SK-N-SH (cell line): ENCODE measurements at regions of chr18 and their contacts with region 1.

Region 1: GRCh38 chr18:61854578-61855448 is 38.0 kb downstream of the RNF152 start:
- DNase-seq: peak; percentile 69
- H3K4me3 ChIP-seq: peak overlapping the region in 1 of 2 experiments; percentile 6; a peak in 1 of 4 replicates
- H3K27ac ChIP-seq: peak overlapping the region; percentile 83 to 95
- H3K4me1 ChIP-seq: peaks cover 33 to 66% of the 10 kb centered on the region in 2 experiments
- H3K27me3 ChIP-seq: no peaks in the 10 kb centered on the region
- CTCF ChIP-seq: no peak
- EP300 ChIP-seq: peak; percentile 22 to 93; a peak in 3 of 4 replicates
- RAD21 ChIP-seq: no peak; the same call in none of the 2 replicates

Region 2: DNA sequence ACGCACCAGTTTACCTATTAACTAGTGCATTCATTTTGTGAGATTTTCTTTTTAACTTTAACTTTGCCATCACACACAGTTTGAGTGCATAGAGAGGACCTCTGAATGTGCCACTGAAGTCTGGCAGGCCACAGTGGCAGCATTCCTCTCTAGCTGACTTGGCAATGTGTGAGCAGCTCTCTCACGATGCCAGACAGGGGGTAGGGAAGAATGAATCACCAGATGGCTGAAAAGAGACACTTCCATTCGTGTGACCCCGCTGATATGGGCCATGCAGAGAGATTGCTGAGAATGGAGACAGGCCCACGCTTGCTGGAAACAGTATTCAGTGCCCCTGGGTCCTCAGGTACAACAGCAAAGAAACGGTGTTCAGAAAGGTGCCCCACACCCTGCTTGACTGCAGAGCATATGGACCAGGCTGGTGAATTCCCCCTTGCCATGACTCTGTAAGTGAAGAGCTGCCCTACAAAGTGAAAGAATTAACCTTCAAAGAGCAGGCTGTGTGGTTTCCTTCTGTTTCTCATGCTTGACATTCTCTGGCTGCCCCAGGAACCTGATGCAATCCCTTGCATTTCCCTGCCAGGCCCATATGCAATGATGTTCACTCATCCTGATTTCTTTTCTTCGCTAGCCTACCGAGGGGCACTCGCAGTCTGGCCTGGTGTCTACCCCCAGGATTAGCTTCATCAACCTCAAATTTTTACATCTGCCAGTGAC is 285.5 kb before region 1 on chr18:
- CTCF ChIA-PET with region 1: no interaction called
- POLR2A ChIA-PET with region 1: no interaction called
- DNase-seq: no peak
- H3K4me3 ChIP-seq: no peak overlapping the region
- H3K27ac ChIP-seq: peak overlapping the region; percentile 70 to 88; a peak in 3 of 4 replicates
- H3K4me1 ChIP-seq: peaks cover 0 to 14% of the 10 kb centered on the region in 2 experiments; a peak in 1 of 4 replicates
- H3K27me3 ChIP-seq: no peaks in the 10 kb centered on the region
- CTCF ChIP-seq: no peak
- EP300 ChIP-seq: peak in 1 of 2 experiments; percentile 61; a peak in 1 of 4 replicates
- RAD21 ChIP-seq: no peak

Region 3: DNA sequence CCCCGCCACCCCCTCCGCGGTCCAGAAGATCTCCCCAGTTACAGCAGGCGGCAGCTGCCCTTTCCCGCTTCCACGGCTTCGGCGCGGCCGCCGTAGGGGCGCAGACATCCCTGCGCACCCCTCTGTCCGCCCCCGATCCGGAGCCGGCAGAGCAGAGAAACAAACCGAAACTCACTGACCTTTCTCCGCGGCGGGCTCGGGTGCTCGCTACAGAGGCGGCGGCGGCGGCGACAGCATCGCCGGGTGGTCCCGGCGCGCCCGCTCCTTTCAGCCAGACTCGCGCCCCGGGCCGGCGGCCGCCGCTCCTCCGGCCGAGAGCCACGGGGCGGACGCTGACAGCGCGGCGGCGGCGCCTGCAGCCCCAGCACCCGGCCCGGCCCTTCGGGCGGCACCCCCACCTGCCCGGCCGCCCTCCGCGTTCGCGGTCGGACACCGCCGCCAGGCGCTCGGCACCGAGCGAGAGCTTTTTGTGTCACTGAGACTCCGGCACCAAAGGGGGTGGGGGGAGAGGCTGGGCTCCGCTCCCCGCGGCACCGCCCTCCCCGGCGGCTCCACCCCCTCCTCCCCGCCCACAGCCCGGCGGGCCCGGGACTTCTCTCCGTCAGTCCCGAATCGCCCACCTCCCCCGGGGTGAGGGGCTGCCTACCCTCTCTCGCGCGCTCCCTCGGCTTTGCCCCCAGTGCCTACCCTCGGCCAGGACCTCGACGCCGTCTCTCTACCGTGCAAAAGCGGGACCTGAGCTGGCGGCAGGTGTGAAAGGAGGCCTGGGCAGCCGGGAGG is 39.3 kb after region 1 on chr18:
- CTCF ChIA-PET with region 1: interaction called, 26 read pairs
- POLR2A ChIA-PET with region 1: interaction called, 22 read pairs
- DNase-seq: peak; percentile 97
- H3K4me3 ChIP-seq: peak overlapping the region; percentile 91 to 95
- H3K27ac ChIP-seq: peak overlapping the region; percentile 27 to 85; a peak in 3 of 4 replicates
- H3K4me1 ChIP-seq: peaks cover 5 to 22% of the 10 kb centered on the region in 2 experiments; a peak in 3 of 4 replicates
- H3K27me3 ChIP-seq: no peaks in the 10 kb centered on the region
- CTCF ChIP-seq: no peak
- EP300 ChIP-seq: no peak
- RAD21 ChIP-seq: peak; percentile 70

Region 4: GRCh38 chr18:61998957-61999356 is 144.1 kb after region 1 on chr18:
- CTCF ChIA-PET with region 1: no interaction called
- POLR2A ChIA-PET with region 1: no interaction called
- DNase-seq: peak; percentile 3
- H3K4me3 ChIP-seq: peak overlapping the region in 1 of 2 experiments; percentile 8; a peak in 1 of 4 replicates
- H3K27ac ChIP-seq: peak overlapping the region; percentile 87 to 89
- H3K4me1 ChIP-seq: peaks cover 2 to 19% of the 10 kb centered on the region in 2 experiments; a peak in 3 of 4 replicates
- H3K27me3 ChIP-seq: no peaks in the 10 kb centered on the region
- CTCF ChIP-seq: no peak
- EP300 ChIP-seq: peak in 1 of 2 experiments; percentile 92; a peak in 2 of 4 replicates
- RAD21 ChIP-seq: no peak